ENCODE measurements at regions of chr3 and their contacts with region 1.

Region 1: DNA sequence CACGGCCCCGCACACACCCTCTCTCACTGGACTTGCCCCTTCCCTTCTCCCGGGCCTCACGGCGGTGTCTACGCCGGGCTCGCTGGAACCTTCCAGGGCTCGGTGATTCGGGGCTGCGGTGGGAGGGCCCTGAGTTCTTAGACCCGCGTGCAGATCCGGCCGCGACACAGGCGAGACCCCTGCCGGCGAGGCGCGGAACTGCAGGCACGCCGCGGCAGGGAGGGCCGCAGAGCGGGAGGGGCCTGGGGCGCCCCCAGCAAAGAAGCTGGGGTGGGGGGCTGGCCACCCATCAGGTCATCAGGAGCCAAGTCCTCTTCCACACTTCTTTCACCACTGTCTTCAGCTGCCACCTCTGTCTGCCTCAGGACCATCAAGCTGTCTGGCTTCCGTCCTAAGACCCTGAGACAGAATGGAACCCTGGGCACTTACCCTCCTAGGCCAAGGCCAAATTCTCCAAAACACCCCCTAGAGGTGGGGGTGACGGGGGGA is 164.5 kb downstream of the XXYLT1 start:
- DNase-seq: peak; percentile 78
- ATAC-seq: peak; percentile 86
- H3K4me3 Mint-ChIP-seq: peak overlapping the region; percentile 57
- H3K27ac Mint-ChIP-seq: no peak overlapping the region
- H3K4me1 Mint-ChIP-seq: peaks cover 30% of the 10 kb centered on the region
- H3K27me3 Mint-ChIP-seq: no peaks in the 10 kb centered on the region
- CTCF ChIP-seq: peak; percentile 100

Region 2: GRCh38 chr3:195001961-195002861 is 104.3 kb before region 1 on chr3:
- CTCF ChIA-PET with region 1: interaction called, 38 read pairs
- POLR2A ChIA-PET with region 1: no interaction called
- DNase-seq: peak; percentile 68
- ATAC-seq: peak; percentile 90
- H3K4me3 Mint-ChIP-seq: no peak overlapping the region
- H3K27ac Mint-ChIP-seq: no peak overlapping the region
- H3K4me1 Mint-ChIP-seq: peaks cover 24% of the 10 kb centered on the region
- H3K27me3 Mint-ChIP-seq: no peaks in the 10 kb centered on the region
- CTCF ChIP-seq: no peak

Region 3: DNA sequence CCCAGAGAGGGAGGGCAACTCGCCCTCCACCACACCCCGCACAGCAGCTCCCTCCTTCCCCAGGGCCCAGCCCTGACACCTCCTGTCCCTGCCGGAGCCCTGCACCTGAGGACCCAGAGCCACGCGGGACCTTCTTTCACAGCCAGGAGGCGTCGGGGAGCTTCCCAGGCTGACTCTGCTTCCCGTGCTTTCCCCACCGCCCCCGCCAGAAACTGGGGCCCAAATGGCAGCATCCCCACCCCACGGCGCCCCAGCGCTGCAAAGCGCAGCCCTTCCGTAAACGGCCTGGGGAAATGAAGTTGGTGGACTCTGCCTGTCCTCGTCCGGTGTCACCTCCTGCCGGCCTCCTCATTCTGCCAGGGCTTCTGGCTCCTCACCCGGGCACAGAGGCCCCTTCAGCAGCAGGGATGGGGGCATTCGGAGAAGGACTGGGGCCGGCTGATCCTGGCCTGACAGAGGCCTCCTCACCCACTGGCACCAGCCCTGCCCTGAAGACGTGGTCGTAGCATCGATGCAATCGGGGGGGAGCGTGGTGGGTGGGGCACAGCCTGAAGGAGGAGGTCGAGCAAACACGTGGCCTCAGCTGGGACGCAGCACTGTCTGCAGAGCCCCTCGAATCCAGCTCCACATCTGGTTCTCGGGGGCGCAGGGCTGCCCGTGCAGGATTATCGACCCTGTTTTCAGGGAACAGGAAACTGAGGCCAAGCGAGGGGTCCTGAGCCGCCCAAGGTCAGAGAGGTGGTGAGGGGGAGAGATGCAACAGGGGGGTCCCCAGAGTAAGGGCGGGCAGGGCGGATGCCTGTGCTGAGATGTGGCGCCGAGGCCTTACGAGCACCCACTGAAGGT is 70.9 kb before region 1 on chr3:
- CTCF ChIA-PET with region 1: interaction called, 12 read pairs
- POLR2A ChIA-PET with region 1: no interaction called
- DNase-seq: peak; percentile 73
- ATAC-seq: peak; percentile 74
- H3K4me3 Mint-ChIP-seq: no peak overlapping the region; the same call in 1 of the 2 replicates
- H3K27ac Mint-ChIP-seq: no peak overlapping the region
- H3K4me1 Mint-ChIP-seq: peaks cover 59% of the 10 kb centered on the region
- H3K27me3 Mint-ChIP-seq: peaks cover 15% of the 10 kb centered on the region
- CTCF ChIP-seq: no peak

Region 4: GRCh38 chr3:195063581-195064193 is 42.8 kb before region 1 on chr3:
- CTCF ChIA-PET with region 1: interaction called, 19 read pairs
- POLR2A ChIA-PET with region 1: no interaction called
- DNase-seq: no peak
- ATAC-seq: no peak
- H3K4me3 Mint-ChIP-seq: no peak overlapping the region
- H3K27ac Mint-ChIP-seq: no peak overlapping the region
- H3K4me1 Mint-ChIP-seq: peaks cover 9% of the 10 kb centered on the region
- H3K27me3 Mint-ChIP-seq: no peaks in the 10 kb centered on the region
- CTCF ChIP-seq: no peak

Region 5: DNA sequence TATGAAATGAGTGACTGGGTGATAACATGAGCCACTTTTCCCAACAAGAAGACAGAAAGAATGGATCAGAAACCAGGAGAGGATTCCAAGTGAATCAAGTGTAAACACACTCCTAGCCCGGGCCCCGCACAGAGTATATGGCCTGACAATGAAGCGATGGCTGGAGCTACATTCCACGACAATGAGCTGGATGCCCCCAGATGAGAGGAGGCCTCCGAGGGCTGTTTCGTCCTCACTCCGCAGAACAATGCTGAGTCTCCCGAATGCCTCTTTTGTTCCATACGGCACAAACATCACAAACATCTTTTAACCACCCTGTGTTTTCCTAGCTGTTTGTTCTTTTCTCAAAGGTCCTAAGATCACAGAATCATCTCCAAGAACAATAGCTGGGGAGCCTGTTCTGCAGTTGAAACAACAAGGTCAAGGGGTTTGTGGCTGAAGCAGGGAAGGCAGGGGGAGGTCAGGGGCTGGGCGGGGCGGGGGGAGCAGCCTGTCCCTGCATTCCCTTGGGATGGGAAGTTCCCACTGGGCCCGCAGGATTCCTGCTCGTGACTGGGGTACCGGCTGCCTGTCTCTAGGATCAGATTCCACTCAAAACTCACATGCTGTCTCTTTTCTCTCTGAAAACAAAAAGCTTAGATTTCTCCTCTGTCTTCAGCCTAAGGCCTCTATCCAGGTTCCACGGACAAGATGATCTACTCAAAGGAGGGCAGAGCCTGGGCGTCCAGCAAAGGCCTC is 13.2 kb after region 1 on chr3:
- CTCF ChIA-PET with region 1: interaction called, 11 read pairs
- POLR2A ChIA-PET with region 1: no interaction called
- DNase-seq: peak; percentile 56
- ATAC-seq: peak; percentile 85
- H3K4me3 Mint-ChIP-seq: peak overlapping the region; percentile 24
- H3K27ac Mint-ChIP-seq: peak overlapping the region; percentile 82
- H3K4me1 Mint-ChIP-seq: peaks cover 29% of the 10 kb centered on the region
- H3K27me3 Mint-ChIP-seq: no peaks in the 10 kb centered on the region
- CTCF ChIP-seq: no peak

Measured in WTC11 (cell line).